AG04449 (cell line): ENCODE measurements at regions of chr9 and their contacts with region 1.

Region 1: DNA sequence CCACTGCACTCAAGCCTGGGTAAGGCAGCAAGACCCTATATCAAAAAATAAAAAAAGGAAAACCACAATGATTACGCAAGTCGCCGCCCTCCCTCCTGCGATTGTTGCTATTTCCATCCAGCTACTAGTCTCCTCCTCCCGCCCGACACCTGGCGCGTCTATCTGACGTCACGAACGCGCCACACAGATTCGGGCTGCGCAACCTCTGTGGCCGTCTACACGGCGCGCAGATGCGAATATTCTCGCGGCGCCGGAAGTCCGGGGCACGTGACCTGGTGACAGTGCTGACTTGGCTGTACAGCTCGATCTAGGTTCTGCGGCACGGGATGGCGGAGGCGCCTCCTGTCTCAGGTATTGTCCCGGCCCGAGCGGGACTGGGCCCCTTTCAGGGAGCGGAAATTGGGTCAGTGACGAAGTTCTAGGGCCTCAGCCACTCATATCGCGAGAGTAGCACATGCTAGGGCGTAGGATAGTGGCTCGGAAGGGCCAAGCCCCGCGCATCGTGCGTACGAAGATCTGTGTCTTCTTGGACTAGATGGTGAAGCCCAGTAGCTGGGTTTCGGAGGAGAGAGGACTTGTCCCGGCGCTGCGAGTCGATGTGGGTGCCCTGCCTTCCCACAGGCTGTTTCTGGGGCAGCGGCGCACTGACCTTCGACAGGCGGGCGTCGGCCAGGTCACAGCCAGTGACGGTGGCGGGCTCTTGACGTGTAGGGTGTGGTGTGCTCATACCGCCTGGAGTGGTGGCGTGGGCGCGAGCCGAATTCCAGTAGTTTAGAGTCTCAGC is at the start of gene NFX1:
- DNase-seq: peak; percentile 92
- H3K4me3 ChIP-seq: peak within 1 kb of the TSS; percentile 97
- CTCF ChIP-seq: no peak

Region 2: GRCh38 chr9:33024966-33025571 is 265.4 kb before region 1 on chr9 and contains the start of gene DNAJA1:
- CTCF ChIA-PET with region 1: no interaction called
- POLR2A ChIA-PET with region 1: interaction called, 11 read pairs
- DNase-seq: peak; percentile 42
- H3K4me3 ChIP-seq: peak within 1 kb of the TSS; percentile 99
- CTCF ChIP-seq: no peak

Region 3: DNA sequence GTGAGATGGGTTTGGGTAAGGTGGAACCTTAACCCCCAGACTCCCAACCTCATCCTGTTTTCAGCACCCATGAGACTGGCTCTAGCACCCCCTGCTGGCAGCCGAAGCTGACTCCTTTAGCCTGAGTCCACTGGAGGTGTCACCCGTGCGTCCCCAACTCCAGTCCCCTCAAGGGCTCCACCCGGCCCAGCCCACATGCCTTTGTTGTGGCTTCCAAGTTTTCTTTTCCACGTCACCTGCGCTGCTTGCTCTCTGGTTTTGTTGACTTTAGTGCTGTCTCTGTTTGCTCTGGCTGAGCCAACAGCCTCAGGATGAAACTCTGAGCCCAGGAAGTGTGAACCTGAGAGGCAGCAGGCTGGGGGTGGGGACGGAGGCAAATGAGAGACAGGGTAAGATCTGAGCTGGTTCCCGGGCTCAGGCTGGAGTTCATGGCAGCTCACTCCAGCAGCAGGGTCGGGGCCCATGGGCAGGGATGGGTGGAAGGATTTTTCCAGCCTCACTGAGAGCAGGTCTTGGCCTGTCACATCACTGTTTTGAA is 125.1 kb after region 1 on chr9:
- CTCF ChIA-PET with region 1: interaction called, 45 read pairs
- POLR2A ChIA-PET with region 1: no interaction called
- DNase-seq: no peak
- H3K4me3 ChIP-seq: no peak overlapping the region
- CTCF ChIP-seq: peak; percentile 75

Region 4: DNA sequence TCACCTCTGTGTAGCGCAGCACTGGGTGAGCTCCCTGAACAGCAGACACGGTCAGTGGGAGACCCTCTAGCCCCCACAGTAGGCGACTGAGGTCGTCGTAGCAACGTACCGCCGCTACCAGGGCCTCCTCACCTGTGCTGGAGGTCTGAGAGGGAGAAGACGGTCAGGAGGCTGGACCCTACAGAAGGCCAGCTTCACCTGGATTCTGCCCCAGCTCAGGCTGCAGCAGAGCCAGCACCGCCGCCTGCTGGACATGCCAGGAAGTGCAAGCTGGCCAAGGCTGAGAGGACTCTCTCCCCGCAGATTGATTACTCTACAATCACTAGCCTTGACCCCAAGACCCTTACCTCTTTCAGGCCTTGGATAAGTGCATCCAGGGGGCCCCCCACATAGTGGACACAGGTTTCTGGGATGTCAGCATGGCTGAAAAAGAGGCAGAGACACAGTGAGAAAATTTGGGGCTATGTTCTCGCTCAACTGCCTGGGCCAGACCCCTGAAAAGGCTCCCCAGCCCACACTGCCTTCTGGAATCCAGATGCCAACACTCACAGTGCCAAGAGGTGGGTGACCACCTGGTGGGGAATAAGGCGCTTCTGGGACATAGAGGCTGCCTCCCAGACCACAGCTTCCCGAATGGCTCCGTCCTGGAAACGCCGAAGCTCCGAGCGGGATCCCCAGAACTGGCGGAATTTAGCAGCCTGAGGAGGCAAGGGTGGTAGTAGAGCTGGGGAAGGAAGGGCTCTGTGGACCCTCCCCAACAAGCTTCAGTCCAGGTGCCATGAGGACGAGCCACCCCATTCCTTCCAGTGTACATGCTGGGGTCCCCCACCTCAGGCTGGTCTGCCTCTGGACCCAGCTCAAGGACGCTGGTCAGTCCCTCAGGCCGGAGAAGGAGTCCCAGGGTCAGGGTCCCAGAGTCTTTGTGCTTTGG is 176.4 kb after region 1 on chr9:
- CTCF ChIA-PET with region 1: interaction called, 30 read pairs
- POLR2A ChIA-PET with region 1: interaction called, 3 read pairs
- DNase-seq: no peak
- H3K4me3 ChIP-seq: no peak overlapping the region
- CTCF ChIP-seq: peak; percentile 93

Region 5: DNA sequence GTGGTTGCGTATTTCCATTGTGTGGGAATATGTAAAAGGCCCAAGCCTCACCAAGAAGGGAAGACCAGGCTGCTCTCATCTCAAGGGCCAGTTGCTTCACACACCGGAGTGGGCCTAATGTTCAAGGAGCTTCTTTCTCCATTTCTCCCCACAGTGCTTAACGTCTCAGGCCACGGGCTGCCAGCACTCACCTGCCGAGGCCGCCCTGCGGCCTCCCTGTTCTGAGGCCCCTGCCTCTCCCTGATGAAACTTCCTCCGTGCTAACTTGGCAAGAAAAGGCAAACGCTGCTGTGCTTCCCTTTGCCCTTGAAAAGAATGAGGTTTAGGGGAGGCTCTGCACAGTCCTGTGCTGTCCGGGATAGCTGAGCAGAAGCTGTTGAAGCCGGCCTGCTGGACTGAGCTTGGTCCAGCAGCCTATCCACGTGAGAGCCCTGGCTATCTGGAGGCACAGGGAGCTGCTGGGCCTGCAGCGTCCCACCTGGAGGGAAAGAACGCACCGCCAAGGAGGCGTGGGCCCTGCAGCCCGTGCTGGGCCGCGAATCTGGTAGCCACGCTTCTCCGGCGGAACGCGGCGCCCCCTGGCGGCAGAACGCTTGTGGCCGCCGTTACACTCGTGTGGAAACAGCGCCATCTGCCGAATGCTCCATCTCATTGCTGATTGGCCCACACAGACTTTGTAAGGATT is 431.4 kb after region 1 on chr9:
- CTCF ChIA-PET with region 1: interaction called, 20 read pairs
- POLR2A ChIA-PET with region 1: no interaction called
- DNase-seq: peak; percentile 10
- H3K4me3 ChIP-seq: no peak overlapping the region
- CTCF ChIP-seq: peak; percentile 99